ENCODE measurements at regions of chr6 and their contacts with region 1.

Region 1: DNA sequence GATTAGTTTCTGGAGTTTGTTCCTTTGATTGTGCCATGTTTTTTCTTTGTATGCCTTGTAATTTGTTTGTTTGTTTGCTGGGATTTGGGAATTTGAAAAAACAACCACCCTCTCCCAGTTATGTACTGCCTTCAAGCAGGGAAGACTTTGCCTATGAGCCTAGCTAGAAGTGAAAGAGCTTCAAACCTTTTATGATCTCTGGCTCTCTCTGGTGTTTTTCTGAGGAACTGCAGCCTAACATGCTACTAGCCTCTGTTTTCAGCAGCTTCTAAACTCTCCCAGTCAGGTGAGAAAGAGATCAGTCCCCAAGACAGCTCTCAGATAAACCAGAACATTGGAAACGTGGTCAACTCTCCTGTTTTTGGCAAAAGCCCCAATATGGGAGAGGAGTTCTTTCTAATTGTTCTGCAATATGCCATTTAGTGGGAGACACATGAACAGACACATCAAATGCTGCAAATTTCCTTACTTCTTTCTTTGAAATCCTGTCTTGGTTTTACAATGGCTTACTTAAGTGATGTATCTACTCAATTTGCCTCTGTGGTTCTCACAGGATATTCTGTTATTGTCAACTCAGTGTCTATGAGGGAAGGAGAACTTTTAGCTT is 58.9 kb upstream of the SERINC1 start:
- DNase-seq: peak; percentile 52
- ATAC-seq: peak; percentile 99
- H3K4me3 Mint-ChIP-seq: no peak overlapping the region
- H3K27ac Mint-ChIP-seq: no peak overlapping the region
- H3K4me1 Mint-ChIP-seq: peaks cover 12% of the 10 kb centered on the region
- H3K27me3 Mint-ChIP-seq: no peaks in the 10 kb centered on the region
- CTCF ChIP-seq: peak; percentile 31; the same call in 1 of the 2 replicates

Region 2: DNA sequence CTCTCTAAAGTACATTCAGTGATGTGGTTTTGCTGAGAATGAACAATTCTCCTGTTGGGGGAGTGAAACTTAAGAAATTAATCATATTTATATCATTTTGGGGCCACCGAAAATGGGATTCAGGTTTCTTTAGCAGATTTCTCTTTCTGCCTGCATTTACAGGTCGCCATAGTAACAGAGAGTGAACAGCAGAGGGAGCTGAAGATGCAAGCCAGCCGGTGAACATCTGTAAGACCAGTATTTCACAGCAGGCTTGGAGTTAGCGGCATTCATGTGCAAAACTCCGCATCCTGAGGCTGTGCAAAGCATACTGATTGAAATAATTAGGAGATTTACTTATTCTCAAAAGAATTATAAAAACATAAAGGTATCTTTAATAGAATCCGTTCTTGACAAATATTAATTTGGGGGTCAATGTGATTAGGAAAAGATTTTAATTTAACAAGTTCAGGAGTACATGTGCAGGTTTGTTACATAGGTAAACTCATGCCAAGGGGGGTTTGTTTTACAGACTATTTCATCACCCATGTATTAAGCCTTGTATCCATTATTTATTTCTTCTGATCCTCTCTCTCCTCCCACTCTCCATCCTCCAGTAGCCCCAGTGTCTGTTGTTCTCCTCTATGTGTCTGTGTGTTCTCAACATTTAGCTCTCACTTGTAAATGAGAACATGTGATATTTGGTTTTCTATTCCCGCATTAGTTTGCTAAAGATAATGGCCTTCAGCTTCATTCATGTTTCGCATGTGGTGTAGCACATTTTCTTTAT is 148.9 kb before region 1 on chr6:
- CTCF ChIA-PET with region 1: interaction called, 16 read pairs
- POLR2A ChIA-PET with region 1: no interaction called
- DNase-seq: peak; percentile 53
- ATAC-seq: peak; percentile 98
- H3K4me3 Mint-ChIP-seq: no peak overlapping the region
- H3K27ac Mint-ChIP-seq: no peak overlapping the region
- H3K4me1 Mint-ChIP-seq: peaks cover 7% of the 10 kb centered on the region
- H3K27me3 Mint-ChIP-seq: peaks cover 83% of the 10 kb centered on the region
- CTCF ChIP-seq: 0 out of 2 replicates have a peak, but pooled peaks have one; percentile 30

Region 3: DNA sequence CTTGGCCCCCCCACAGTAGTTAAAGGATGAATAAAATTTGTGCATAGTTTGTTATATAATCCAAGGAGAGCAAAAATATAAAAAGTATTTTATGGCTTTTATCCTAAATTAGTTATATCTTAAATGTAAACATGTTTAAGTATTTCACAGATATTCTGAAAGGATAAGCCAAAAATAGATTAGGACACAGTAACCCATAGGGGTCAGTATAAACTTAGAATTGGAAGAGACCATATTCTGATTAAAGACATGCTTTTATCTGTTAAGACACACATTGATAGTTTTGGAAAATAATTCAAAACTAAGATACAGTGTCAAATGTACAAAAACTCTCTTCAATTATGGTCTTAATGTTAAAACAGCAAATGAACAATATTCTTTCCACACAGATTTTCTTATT is 54.4 kb before region 1 on chr6:
- CTCF ChIA-PET with region 1: interaction called, 15 read pairs
- POLR2A ChIA-PET with region 1: no interaction called
- DNase-seq: no peak
- ATAC-seq: no peak
- H3K4me3 Mint-ChIP-seq: no peak overlapping the region
- H3K27ac Mint-ChIP-seq: no peak overlapping the region
- H3K4me1 Mint-ChIP-seq: no peaks in the 10 kb centered on the region
- H3K27me3 Mint-ChIP-seq: no peaks in the 10 kb centered on the region
- CTCF ChIP-seq: no peak

Region 4: DNA sequence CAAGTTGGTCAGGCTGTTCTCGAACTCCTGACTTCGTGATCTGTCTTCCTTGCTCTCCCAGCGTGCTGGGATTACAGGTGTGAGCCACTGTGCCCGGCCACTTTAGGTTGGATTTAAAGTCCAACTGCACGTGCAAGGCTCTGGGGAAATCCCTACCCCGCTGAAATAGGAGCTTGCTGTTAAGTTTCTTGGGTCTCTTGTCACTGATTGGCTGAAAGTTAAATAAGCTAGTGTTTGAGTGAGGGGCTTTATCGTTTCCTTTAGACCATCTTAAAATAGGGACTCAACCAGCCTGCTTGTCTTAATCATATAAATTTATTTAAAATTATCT is 47.8 kb before region 1 on chr6:
- CTCF ChIA-PET with region 1: interaction called, 155 read pairs
- POLR2A ChIA-PET with region 1: interaction called, 5 read pairs
- DNase-seq: no peak
- ATAC-seq: peak; percentile 28; the same call in 1 of the 2 replicates
- H3K4me3 Mint-ChIP-seq: peak overlapping the region; percentile 80
- H3K27ac Mint-ChIP-seq: no peak overlapping the region
- H3K4me1 Mint-ChIP-seq: peaks cover 23% of the 10 kb centered on the region
- H3K27me3 Mint-ChIP-seq: no peaks in the 10 kb centered on the region
- CTCF ChIP-seq: no peak

Region 5: DNA sequence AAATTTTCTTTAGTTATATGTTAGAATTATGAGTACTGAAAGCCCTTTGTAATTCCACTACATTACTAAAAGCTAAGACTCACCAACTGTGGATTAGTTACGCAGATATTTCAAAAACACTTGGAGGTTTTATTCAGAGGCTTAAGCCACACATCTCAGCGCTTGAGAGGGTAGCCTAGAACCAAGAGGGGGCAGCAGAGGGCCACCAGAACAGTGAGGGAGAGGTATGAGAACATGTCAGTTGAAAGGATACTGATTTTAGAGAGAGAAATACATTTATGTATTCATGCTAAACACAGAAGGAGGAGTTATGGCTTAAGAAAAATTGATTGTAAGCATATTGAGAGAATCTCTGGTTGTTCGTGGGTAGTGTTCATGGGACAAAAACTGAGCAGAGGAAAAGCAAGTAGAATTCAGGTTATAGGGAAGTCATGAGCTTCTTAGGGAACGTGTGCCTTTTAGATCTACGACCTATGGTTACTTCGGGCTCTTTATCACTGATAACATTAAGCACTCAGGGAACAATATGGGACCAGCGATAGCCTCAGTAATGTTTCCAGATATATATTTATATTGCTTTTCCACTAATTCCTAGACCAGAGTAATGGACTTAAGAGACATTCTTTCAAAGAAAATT is 38.5 kb before region 1 on chr6:
- CTCF ChIA-PET with region 1: interaction called, 155 read pairs
- POLR2A ChIA-PET with region 1: interaction called, 3 read pairs
- DNase-seq: peak; percentile 73
- ATAC-seq: peak; percentile 98
- H3K4me3 Mint-ChIP-seq: no peak overlapping the region
- H3K27ac Mint-ChIP-seq: no peak overlapping the region
- H3K4me1 Mint-ChIP-seq: peaks cover 7% of the 10 kb centered on the region
- H3K27me3 Mint-ChIP-seq: no peaks in the 10 kb centered on the region
- CTCF ChIP-seq: peak; percentile 70; the same call in 1 of the 2 replicates

Region 6: GRCh38 chr6:122511193-122511924 is 19.2 kb before region 1 on chr6:
- CTCF ChIA-PET with region 1: interaction called, 14 read pairs
- POLR2A ChIA-PET with region 1: no interaction called
- DNase-seq: no peak
- ATAC-seq: no peak
- H3K4me3 Mint-ChIP-seq: no peak overlapping the region
- H3K27ac Mint-ChIP-seq: no peak overlapping the region; the same call in 1 of the 2 replicates
- H3K4me1 Mint-ChIP-seq: peaks cover 4% of the 10 kb centered on the region; the same call in 1 of the 2 replicates
- H3K27me3 Mint-ChIP-seq: no peaks in the 10 kb centered on the region
- CTCF ChIP-seq: no peak

Measured in WTC11 (cell line).